Activated CD8-positive, alpha-beta T cell treated with anti-CD3 and anti-CD28 coated beads for 36 hours (primary cell): ENCODE measurements at regions of chr7 and their contacts with region 1.

Region 1: DNA sequence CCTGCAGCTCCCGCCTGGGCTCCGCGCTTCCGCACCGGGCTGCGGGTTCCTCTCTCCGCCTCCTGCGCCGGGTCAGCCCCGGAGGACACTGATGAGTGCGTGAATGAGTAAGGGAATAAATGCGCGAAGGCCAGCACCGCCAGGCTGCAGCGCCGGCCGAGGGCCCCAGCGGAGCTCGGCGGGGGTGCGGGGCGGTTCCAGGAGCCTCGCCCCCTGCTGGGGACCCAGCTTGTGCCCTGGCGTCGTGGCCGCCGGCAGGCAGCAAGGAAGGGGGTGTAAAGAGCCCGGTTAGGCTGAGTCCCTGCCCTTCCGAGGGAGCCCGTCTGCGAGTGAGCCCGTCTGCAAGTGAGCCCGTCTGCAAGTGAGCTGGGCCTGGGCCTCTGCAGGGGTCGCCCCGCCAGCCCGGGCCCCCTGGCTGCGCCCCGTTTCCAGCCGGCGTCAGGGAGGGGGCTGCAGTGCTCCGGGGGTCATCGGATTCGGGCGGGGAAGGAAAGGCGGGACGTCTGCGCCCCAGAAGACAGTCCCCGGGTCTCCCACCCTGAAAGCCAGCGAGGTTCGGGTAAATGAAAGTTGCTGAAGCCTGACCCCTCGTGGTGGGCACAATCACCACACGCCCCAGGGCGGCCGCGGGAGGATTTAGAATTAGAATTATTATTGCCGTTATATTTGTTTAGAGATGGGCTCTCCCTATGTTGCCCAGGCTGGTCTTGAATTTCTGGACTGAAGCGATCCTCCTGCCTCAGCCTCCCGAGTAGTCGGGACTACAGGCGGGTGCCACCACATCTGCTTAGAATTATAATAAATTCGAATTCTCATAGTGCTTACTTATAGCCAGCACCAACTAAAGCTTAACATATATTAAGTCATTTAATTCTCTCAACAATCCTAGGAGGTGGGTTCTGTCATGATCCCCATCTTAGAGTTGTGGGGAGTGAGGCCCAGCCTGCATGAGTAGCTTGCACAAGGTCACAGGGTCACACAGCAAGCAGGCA is 8.6 kb upstream of the CRYGN start:
- DNase-seq: peak; percentile 86
- ATAC-seq: peak; percentile 83
- H3K4me3 Mint-ChIP-seq: peak overlapping the region; percentile 57
- H3K27ac Mint-ChIP-seq: no peak overlapping the region
- H3K4me1 Mint-ChIP-seq: peaks cover 11% of the 10 kb centered on the region
- H3K27me3 Mint-ChIP-seq: peaks cover 5% of the 10 kb centered on the region
- CTCF ChIP-seq: peak; percentile 90

Region 2: GRCh38 chr7:151261529-151261928 is 187.0 kb before region 1 on chr7:
- CTCF ChIA-PET with region 1: no interaction called
- POLR2A ChIA-PET with region 1: no interaction called
- intact Hi-C with region 1: loop called (anchors 5 kb)
- DNase-seq: no peak
- ATAC-seq: no peak
- H3K4me3 Mint-ChIP-seq: no peak overlapping the region
- H3K27ac Mint-ChIP-seq: no peak overlapping the region
- H3K4me1 Mint-ChIP-seq: no peaks in the 10 kb centered on the region
- H3K27me3 Mint-ChIP-seq: no peaks in the 10 kb centered on the region
- CTCF ChIP-seq: no peak

Region 3: GRCh38 chr7:151276666-151277590 is 171.6 kb before region 1 on chr7:
- CTCF ChIA-PET with region 1: no interaction called
- POLR2A ChIA-PET with region 1: no interaction called
- intact Hi-C with region 1: no loop called
- DNase-seq: peak; percentile 83
- ATAC-seq: peak; percentile 86
- H3K4me3 Mint-ChIP-seq: peak overlapping the region; percentile 67
- H3K27ac Mint-ChIP-seq: peak overlapping the region; percentile 60
- H3K4me1 Mint-ChIP-seq: peaks cover 30% of the 10 kb centered on the region
- H3K27me3 Mint-ChIP-seq: peaks cover 2% of the 10 kb centered on the region
- CTCF ChIP-seq: no peak

Region 4: DNA sequence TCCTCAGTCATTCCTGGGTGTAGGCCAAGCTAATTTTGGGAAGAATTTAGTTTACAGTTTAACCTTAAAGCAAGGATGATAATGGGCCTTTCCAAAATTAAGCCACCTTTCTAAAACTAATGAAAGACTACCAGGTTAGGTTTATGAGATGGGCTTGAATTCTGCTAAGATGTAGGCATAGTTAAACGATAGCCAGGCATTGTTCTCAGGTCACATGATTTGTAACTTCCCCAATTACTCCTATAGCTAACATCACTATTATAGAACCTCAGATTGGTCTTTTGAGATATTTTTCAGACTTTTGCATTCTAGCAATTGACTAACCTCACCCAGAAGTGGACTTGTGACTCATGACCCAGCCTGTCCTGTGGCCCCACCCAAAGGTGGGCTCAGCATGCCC is 113.9 kb before region 1 on chr7:
- CTCF ChIA-PET with region 1: no interaction called
- POLR2A ChIA-PET with region 1: no interaction called
- intact Hi-C with region 1: no loop called
- DNase-seq: no peak
- ATAC-seq: no peak
- H3K4me3 Mint-ChIP-seq: no peak overlapping the region
- H3K27ac Mint-ChIP-seq: no peak overlapping the region
- H3K4me1 Mint-ChIP-seq: peaks cover 27% of the 10 kb centered on the region
- H3K27me3 Mint-ChIP-seq: no peaks in the 10 kb centered on the region
- CTCF ChIP-seq: no peak

Region 5: DNA sequence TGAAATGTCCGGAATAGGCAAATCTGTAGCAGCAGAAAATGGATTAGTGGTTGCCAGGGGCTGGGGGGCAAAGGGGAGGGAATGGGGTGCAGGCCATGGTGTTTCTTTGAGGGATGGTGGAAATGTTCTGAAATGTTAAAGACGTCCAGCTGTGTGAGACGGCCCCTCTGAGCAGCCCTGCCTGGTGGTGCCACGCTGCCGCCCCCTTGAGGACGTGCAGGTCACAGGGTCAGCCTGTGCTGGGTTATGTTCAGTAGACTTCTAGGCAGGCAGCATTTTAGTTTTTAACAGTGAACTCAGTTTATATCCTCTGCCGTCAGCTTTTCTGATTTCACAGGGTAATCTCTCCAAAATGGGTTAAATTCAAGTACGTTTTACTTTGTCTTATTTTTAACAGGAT is 97.5 kb before region 1 on chr7:
- CTCF ChIA-PET with region 1: interaction called, 76 read pairs
- POLR2A ChIA-PET with region 1: interaction called, 10 read pairs
- intact Hi-C with region 1: no loop called
- DNase-seq: peak; percentile 75
- ATAC-seq: no peak
- H3K4me3 Mint-ChIP-seq: peak overlapping the region; percentile 52
- H3K27ac Mint-ChIP-seq: peak overlapping the region; percentile 86
- H3K4me1 Mint-ChIP-seq: peaks cover 47% of the 10 kb centered on the region
- H3K27me3 Mint-ChIP-seq: no peaks in the 10 kb centered on the region
- CTCF ChIP-seq: no peak

Region 6: GRCh38 chr7:151368136-151368571 is 80.4 kb before region 1 on chr7:
- CTCF ChIA-PET with region 1: interaction called, 227 read pairs
- POLR2A ChIA-PET with region 1: interaction called, 9 read pairs
- intact Hi-C with region 1: loop called (anchors 1 kb)
- DNase-seq: peak; percentile 88
- ATAC-seq: peak; percentile 100
- H3K4me3 Mint-ChIP-seq: no peak overlapping the region
- H3K27ac Mint-ChIP-seq: no peak overlapping the region
- H3K4me1 Mint-ChIP-seq: peaks cover 11% of the 10 kb centered on the region
- H3K27me3 Mint-ChIP-seq: no peaks in the 10 kb centered on the region
- CTCF ChIP-seq: peak; percentile 93

Region 7: DNA sequence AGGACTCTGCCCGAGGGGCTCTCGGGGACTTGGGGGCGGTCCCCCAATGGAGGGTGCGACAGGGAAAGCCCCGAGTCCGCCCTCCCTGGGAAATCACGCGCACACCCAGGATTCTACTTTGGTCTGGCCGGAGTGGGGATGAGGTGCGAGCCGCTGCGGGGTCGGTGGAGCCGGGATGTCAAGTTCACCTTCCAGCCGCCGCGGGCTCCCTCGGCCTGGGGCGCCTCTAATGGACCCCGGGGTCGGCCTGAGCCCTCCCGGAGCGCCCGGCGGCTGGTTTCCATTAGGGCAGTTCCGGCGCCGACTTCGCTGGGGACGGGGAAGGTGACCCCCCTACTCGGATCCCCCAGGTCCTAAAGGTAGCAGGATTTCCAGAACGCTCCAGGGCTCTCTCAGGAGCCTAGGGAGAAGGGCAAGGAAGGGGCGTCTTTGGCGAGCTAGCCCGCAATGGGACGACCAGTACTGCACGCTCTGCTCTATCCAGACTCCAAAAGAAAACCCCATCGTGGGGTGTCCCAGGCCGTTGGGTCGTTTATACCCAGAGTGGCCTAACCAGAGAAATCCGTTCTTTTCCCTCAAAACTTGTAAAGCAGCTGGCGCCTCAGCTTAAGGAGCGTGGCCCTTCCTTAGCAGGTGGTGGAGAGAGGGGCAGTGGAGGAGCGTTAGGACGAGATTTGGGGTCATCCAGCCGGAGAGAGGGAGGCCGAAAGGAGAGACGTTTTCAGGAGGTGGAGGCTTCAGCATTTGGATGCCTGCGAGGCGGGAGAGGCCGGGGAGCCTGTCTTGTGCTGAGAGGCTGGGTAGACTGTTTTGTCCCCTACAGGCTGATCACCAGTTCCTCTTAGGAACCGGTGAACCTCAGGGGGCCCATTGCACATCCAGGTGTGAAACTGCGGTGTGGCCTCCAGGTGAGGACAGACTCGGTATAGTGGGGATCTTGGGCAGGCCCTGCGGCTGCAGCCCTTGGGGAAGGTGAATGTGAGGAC is 37.9 kb before region 1 on chr7:
- CTCF ChIA-PET with region 1: interaction called, 35 read pairs
- POLR2A ChIA-PET with region 1: interaction called, 7 read pairs
- intact Hi-C with region 1: no loop called
- DNase-seq: no peak
- ATAC-seq: no peak
- H3K4me3 Mint-ChIP-seq: peak overlapping the region; percentile 42
- H3K27ac Mint-ChIP-seq: no peak overlapping the region
- H3K4me1 Mint-ChIP-seq: peaks cover 35% of the 10 kb centered on the region
- H3K27me3 Mint-ChIP-seq: peaks cover 30% of the 10 kb centered on the region
- CTCF ChIP-seq: no peak

Region 8: GRCh38 chr7:151459726-151460473 is 11.3 kb after region 1 on chr7:
- CTCF ChIA-PET with region 1: interaction called, 32 read pairs
- POLR2A ChIA-PET with region 1: interaction called, 7 read pairs
- intact Hi-C with region 1: no loop called
- DNase-seq: no peak
- ATAC-seq: no peak
- H3K4me3 Mint-ChIP-seq: no peak overlapping the region
- H3K27ac Mint-ChIP-seq: no peak overlapping the region
- H3K4me1 Mint-ChIP-seq: peaks cover 7% of the 10 kb centered on the region
- H3K27me3 Mint-ChIP-seq: peaks cover 11% of the 10 kb centered on the region
- CTCF ChIP-seq: no peak

Region 9: GRCh38 chr7:151631968-151632749 is 183.6 kb after region 1 on chr7:
- CTCF ChIA-PET with region 1: no interaction called
- POLR2A ChIA-PET with region 1: no interaction called
- intact Hi-C with region 1: no loop called
- DNase-seq: peak; percentile 84
- ATAC-seq: peak; percentile 80
- H3K4me3 Mint-ChIP-seq: peak overlapping the region; percentile 88
- H3K27ac Mint-ChIP-seq: peak overlapping the region; percentile 95
- H3K4me1 Mint-ChIP-seq: peaks cover 27% of the 10 kb centered on the region
- H3K27me3 Mint-ChIP-seq: no peaks in the 10 kb centered on the region
- CTCF ChIP-seq: peak; percentile 23

Region 10: GRCh38 chr7:151984606-151985005 is 536.0 kb after region 1 on chr7:
- CTCF ChIA-PET with region 1: no interaction called
- POLR2A ChIA-PET with region 1: no interaction called
- intact Hi-C with region 1: no loop called
- DNase-seq: no peak
- ATAC-seq: no peak
- H3K4me3 Mint-ChIP-seq: no peak overlapping the region
- H3K27ac Mint-ChIP-seq: no peak overlapping the region
- H3K4me1 Mint-ChIP-seq: no peaks in the 10 kb centered on the region
- H3K27me3 Mint-ChIP-seq: peaks cover 3% of the 10 kb centered on the region
- CTCF ChIP-seq: no peak